Head of caudate nucleus (tissue), 42 donors: ENCODE measurements at regions of chr7 and their contacts with region 1.

Region 1: DNA sequence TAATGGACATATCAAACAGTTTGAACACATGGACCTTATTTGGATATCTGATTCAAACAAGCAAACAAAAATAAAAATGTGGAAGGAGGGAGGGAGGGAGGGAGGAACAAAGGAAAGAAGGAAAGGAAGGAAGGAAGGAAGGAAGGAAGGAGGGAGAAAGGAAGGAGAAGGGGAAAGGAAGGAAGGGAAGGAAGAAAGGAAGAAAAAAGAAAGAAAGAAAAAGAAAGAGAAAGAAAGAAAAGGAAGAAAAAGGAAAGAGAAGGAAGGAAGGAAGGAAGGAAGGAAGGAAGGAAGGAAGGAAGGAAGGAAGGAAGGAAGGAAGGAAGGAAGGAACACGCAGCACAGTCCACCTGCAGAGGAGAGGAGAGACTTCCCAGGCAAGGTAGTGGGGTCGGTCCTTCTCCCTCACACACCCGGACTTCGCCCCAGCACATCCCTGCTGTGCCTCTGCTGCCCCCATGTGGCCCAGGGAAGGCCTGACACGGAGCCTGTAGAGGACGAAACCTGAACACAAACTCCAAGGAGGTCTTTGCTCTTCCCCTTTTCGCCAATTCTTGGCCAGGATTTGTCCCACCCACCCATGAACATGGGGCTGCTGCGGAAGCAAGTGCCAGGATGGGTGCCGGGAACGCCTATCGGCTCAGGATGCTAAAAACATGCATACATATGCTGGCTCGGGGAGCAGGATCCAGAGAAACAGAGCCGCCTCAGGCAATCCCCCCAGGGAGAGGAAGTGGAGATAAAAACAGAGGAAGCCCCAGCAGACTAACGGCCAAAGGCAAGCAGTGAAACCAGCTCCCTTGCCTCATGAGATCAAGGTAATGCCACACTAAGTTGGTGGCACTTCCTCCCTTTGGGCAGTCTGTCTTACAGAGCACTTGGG is 52.3 kb upstream of the DGKI start:
- DNase-seq: peak; percentile 74 to 95 (median 88)

Region 2: GRCh38 chr7:137421366-137421765 is 477.7 kb before region 1 on chr7:
- intact Hi-C with region 1: no loop called
- DNase-seq: no peak

Region 3: GRCh38 chr7:137656227-137656849 is 242.7 kb before region 1 on chr7:
- intact Hi-C with region 1: loop called (anchors 5 kb)
- DNase-seq: peak; percentile 65 to 94 (median 85)

Region 4: GRCh38 chr7:137760111-137760510 is 139.0 kb before region 1 on chr7:
- intact Hi-C with region 1: no loop called
- DNase-seq: peak in 19 of 42 donors; percentile 5 to 61 (median 27)

Region 5: GRCh38 chr7:137839903-137840779 is 58.9 kb before region 1 on chr7:
- intact Hi-C with region 1: loop called (anchors 10 kb)
- DNase-seq: no peak

Region 6: GRCh38 chr7:137975221-137975620 is 76.1 kb after region 1 on chr7:
- intact Hi-C with region 1: no loop called
- DNase-seq: peak in 41 of 42 donors; percentile 18 to 85 (median 64)

Region 7: DNA sequence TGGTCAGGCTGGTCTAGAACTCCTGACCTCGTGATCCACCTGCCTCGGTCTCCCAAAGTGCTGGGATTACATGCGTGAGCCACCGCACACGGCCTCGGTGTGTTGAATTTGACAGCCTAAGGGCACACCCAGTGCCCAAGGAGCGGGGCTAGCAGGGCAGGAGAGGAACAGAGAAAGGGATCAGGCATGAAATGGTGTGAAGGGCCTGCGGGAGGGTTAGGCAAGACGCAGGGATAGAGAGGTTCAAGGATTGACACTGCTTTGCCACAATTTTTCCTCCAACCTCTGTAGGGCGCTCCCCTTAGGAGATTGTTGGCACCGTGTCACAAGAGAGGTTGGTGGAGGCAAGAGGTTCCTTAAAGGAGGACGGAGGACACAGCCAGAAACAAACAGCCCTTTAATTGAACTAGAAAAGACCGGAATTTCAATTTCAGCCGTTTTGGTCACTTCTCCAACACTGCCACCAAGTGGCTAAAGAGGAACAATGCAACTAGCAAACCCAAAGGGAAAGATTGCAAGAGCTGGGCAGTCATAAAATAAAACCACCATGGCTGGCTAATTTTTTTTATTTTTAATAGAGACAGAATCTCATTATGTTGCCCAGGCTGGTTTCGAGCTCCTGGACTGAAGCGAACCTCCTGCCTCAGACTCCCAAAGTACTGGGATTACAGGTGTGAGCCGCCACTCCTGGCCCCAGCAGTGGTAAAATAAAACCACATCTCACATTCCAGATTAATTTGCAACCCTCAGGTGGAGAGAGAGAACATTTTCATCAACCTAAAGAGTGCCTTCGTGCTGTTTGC is 109.7 kb after region 1 on chr7:
- intact Hi-C with region 1: loop called (anchors 2 kb)
- DNase-seq: peak in 25 of 42 donors; percentile 10 to 80 (median 46)